Natural killer cell (primary cell): ENCODE measurements at regions of chr2 and their contacts with region 1.

Region 1: GRCh38 chr2:230225486-230225885 is at the start of gene SP140:
- DNase-seq: peak; percentile 68 to 93
- ATAC-seq: peak; percentile 92 to 98 (median 97)
- H3K4me3 ChIP-seq: peak within 1 kb of the TSS; percentile 56
- H3K4me3 Mint-ChIP-seq: peak within 1 kb of the TSS; percentile 92
- H3K27ac ChIP-seq: peak within 1 kb of the TSS; percentile 90
- H3K27ac Mint-ChIP-seq: peak within 1 kb of the TSS; percentile 99 to 100
- H3K4me1 ChIP-seq: peaks cover 40% of the 10 kb centered on the region
- H3K4me1 Mint-ChIP-seq: peaks cover 50 to 61% of the 10 kb centered on the region in 2 donors
- H3K27me3 ChIP-seq: no peaks in the 10 kb centered on the region
- H3K27me3 Mint-ChIP-seq: no peaks in the 10 kb centered on the region
- CTCF ChIP-seq: no peak
- total RNA-seq, gene SP140: 69.1 to 89.9 (median 77.4) TPM

Region 2: DNA sequence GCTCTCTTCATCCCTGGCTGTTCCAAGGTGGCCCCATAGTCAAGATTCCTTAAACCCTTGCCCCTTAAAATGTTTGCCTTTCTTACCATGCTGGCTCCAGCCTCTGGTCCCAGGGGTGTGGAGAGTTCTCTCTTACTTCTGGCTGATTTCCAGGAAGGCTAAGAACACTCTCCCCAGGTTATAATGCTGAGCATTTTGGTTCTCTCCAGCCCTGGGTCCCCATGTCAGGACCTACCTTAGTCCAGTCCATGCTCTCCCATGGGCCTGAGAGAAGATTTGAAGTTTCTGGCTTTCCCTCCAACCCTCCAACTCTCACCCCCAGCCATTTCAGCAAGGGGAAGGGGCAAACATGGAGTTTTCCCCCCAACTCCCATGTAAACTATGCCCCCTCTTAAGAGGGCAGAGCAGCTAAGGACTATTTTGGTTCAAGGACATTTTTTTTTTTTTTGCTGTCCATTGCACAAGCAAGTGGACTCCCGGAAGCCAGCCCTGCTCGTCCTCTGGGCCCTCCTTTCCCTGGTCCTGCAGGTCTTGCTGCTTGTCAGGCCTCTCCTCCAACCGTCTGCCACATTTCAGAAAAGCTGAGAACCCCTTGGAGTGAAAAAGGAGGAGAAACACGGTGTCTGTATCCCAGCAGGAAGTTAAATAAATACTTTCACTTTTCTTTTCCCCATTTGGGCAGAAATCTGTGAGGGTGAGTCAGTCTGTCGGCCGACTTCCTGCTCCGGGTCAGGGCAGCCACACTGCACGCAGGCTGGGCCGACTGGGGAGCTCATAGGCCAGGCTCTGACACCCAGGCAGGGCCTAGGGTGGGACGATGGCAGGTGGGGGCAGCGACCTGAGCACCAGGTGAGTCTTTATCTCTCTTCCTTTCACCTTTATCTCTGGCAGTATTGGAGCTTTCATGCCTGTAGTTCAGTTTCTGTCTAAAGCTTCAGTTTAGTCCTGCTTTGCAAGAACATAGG is 101.2 kb after region 1 on chr2 and contains the start of gene SP140L:
- intact Hi-C with region 1: loop called (anchors 5 kb)
- DNase-seq: peak; percentile 72 to 88
- ATAC-seq: peak; percentile 96 to 100 (median 98)
- H3K4me3 ChIP-seq: peak within 1 kb of the TSS; percentile 73
- H3K4me3 Mint-ChIP-seq: peak within 1 kb of the TSS; percentile 98
- H3K27ac ChIP-seq: peak within 1 kb of the TSS; percentile 97
- H3K27ac Mint-ChIP-seq: peak within 1 kb of the TSS; percentile 98 to 99
- H3K4me1 ChIP-seq: peaks cover 34% of the 10 kb centered on the region
- H3K4me1 Mint-ChIP-seq: peaks cover 73 to 74% of the 10 kb centered on the region in 2 donors
- H3K27me3 ChIP-seq: no peaks in the 10 kb centered on the region
- H3K27me3 Mint-ChIP-seq: no peaks in the 10 kb centered on the region
- CTCF ChIP-seq: no peak
- total RNA-seq, gene SP140L: 58.4 to 92.6 (median 73.4) TPM